ENCODE measurements at regions of chr1 and their contacts with region 1.

Region 1: GRCh38 chr1:160046494-160047110 is 14.8 kb upstream of the PIGM start:
- DNase-seq: no peak
- H3K4me3 ChIP-seq: peak overlapping the region; percentile 15; the same call in 1 of the 2 replicates
- CTCF ChIP-seq: peak; percentile 39

Region 2: DNA sequence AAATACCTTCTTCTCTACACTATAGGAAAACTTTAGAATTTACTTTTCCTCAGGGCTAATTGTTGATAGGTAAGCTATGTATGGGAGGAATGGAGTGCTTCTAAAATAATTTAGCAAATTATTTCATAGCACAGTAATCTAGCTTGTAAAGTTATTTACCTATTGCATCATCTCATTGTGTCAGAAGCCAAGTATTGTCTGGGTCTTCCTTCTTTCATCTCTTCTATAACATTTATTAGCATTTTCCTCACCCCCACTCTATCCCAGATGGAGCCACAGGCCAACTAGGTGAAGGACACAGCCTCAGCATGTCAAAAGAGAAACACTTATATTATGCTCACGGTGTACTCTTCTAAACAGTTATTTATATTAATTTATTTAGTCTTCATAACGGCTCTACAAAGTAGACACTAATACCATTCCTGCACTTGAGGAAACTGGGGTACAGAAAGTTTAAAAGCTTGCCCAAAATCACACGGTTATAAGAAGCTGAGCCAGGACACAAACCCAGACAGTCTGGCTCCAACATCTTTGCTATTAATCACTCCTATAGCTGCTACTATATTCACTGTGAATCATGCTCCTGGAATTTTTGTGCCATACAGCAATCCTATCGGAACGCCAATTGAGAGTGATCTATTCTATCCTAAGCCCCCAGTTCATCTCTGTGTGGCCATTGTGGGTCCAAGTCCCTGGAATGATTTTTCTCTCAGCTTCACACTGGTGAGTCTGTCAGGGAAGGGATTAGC is 553.9 kb before region 1 on chr1:
- CTCF ChIA-PET with region 1: no interaction called
- POLR2A ChIA-PET with region 1: no interaction called
- DNase-seq: peak; percentile 10
- H3K4me3 ChIP-seq: no peak overlapping the region
- CTCF ChIP-seq: no peak

Region 3: GRCh38 chr1:160031365-160032164 is 15.0 kb before region 1 on chr1 and contains the start of gene PIGM:
- CTCF ChIA-PET with region 1: interaction called, 53 read pairs
- POLR2A ChIA-PET with region 1: no interaction called
- DNase-seq: peak; percentile 38
- H3K4me3 ChIP-seq: peak within 1 kb of the TSS; percentile 88
- CTCF ChIP-seq: no peak

Region 4: DNA sequence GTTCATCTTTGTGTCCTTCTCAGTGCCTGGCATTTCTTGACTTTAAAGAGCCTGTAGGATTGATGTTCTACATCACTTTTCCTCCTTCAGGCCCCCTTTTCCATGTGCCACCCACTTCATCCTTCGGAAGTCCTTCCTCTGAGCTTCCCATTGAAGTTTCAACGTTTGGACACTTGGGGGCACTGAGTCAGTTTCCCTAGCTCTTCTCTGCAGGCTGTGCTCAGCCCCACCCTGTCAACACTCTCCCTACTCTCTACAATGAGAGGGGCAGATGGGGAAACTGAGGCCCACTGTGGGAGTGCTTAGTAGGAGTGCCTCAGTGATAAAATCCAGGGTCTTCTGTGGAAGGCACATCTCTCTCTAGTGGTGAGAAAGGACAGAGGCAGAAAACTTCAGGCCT is 11.5 kb after region 1 on chr1:
- CTCF ChIA-PET with region 1: interaction called, 43 read pairs
- POLR2A ChIA-PET with region 1: no interaction called
- DNase-seq: no peak
- H3K4me3 ChIP-seq: no peak overlapping the region
- CTCF ChIP-seq: peak; percentile 24

Region 5: DNA sequence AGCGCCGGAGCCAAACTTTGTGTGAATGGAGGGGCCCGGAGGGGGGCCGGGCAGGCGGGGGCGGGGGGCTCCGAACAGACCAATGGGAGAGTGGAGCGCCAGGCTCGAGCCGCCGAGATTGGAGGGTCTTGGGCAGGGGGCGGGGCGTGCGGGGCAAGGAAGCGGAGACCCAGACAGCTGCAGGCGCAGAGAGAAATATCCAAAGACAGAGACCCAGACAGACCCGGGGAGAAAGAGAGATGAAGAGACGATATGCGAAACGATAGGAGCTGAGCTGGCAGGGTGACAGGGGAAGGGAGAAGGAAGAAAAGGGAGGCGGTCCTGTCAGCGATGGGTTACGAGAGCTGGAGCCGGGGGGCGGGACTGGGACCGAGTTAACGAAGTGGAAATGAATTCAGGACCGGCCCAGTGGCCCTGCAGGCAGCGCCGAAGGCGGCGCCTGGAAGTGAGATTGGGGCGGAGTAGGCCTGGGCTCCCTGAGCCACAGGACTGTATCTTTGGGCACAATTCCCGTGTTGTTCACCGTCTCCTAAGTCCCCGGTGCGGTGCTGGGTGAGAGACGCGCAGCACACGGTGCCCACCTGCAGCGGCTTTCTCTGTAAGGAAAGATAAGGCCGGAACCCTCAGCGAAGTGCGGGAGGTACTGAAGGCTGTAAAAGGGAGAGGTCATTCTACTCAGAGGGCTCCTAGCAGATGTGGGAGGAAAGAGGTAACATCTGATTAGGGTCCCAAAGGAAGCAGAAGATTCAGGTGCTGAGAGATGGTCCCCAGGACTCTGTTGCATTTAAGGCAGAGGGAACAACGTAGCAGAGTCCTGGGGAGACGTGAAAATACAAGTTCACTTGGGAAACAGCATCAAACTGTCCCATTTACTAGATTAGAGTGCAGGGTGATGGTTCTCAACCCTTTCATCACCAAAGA is 23.9 kb after region 1 on chr1:
- CTCF ChIA-PET with region 1: interaction called, 12 read pairs
- POLR2A ChIA-PET with region 1: no interaction called
- DNase-seq: no peak
- H3K4me3 ChIP-seq: peak overlapping the region; percentile 61
- CTCF ChIP-seq: no peak